Ovary (tissue), 10 donors: ENCODE measurements at regions of chr18 and their contacts with region 1.

Region 1: DNA sequence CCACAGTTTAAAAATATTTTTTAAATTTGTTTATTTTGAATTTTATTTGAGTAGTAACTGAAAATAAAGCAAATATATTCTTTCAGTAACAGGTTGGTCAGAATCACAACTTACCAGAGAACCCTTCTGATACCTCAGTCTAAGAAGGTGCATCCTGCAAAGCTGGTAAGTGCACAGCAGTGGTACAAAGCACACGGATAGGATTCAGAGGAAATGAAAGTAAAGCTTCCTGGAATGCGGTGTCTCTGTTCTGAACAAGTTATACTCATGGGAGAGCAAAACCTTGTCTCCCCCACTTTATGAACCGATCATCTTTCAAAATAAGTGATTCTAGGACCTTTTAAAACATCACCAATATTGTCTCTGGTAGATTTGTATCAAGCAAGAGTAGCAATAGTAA is 398.3 kb downstream of the TMX3 start:
- DNase-seq: no peak
- H3K4me3 ChIP-seq: no peak overlapping the region
- H3K27ac ChIP-seq: no peak overlapping the region
- H3K4me1 ChIP-seq: no peaks in the 10 kb centered on the region
- H3K27me3 ChIP-seq: no peaks in the 10 kb centered on the region
- CTCF ChIP-seq: no peak
- EP300 ChIP-seq: no peak
- POLR2A ChIP-seq: no peak

Region 2: GRCh38 chr18:68330658-68331057 is 14.0 kb after region 1 on chr18:
- intact Hi-C with region 1: loop called in 1 of 4 experiments (anchors 2 kb)
- DNase-seq: no peak
- H3K4me3 ChIP-seq: no peak overlapping the region
- H3K27ac ChIP-seq: no peak overlapping the region
- H3K4me1 ChIP-seq: no peaks in the 10 kb centered on the region
- H3K27me3 ChIP-seq: no peaks in the 10 kb centered on the region
- CTCF ChIP-seq: no peak
- EP300 ChIP-seq: no peak
- POLR2A ChIP-seq: no peak

Region 3: DNA sequence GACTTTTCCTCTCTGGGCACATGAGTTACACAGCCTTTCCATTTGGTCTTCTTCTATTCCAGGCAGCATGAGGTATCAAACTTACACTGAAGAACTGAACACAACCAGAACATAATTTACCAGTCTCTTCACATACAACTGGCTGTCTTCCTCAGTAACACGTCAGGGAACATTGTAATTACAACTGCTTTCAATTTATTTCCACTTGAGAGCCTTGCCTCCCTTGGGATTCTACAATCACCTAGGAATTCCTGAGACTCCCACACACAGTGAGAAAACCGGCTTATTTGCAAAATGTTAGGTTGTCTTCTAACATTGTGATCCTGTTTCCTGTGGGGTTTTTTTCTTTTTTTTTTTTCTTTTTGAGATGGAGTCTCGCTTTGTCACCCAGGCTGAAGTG is 248.3 kb after region 1 on chr18:
- intact Hi-C with region 1: no loop called
- DNase-seq: no peak
- H3K4me3 ChIP-seq: no peak overlapping the region
- H3K27ac ChIP-seq: no peak overlapping the region
- H3K4me1 ChIP-seq: no peaks in the 10 kb centered on the region
- H3K27me3 ChIP-seq: no peaks in the 10 kb centered on the region
- CTCF ChIP-seq: no peak
- EP300 ChIP-seq: no peak
- POLR2A ChIP-seq: no peak

Region 4: GRCh38 chr18:68604256-68604655 is 287.6 kb after region 1 on chr18:
- intact Hi-C with region 1: no loop called
- DNase-seq: no peak
- H3K4me3 ChIP-seq: no peak overlapping the region
- H3K27ac ChIP-seq: no peak overlapping the region
- H3K4me1 ChIP-seq: no peaks in the 10 kb centered on the region
- H3K27me3 ChIP-seq: no peaks in the 10 kb centered on the region
- CTCF ChIP-seq: no peak
- EP300 ChIP-seq: no peak
- POLR2A ChIP-seq: no peak